Motor neuron (in vitro differentiated cells): ENCODE measurements at regions of chr2 and their contacts with region 1.

Region 1: DNA sequence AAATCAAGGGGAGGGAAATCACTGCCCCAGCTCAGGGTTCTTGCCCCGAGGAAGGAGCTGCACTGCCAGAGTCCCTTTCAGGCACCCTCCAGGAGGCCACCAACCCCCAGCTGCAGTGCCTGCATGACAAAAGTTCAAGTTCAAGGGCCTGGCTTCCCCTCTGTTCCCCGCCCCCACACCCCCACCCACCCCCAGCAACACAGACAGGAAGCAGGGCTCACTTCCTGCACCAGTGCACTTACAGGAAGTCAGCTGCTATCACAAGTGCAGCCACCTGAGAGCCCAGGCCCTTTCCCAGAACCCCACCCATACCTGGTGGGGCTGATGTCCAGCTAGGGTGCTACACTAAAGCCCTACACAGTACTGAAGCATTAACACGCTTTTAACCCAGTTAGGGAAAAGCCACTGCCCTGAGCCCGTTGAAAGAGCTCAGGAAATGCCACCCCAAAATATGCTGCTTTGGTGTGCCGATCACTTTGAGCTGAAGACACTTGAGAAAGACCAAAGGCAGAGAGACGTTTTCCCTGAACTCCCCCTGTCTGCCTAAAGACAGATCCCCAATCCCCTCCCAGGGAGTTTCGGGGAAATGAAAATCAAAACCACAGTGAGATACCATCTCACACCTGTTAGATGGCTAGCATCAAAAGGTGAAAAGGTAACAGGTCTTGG is 109.9 kb upstream of the CAB39 start:
- ATAC-seq: no peak
- H3K4me3 ChIP-seq: no peak overlapping the region
- H3K27ac ChIP-seq: no peak overlapping the region
- H3K4me1 ChIP-seq: no peaks in the 10 kb centered on the region

Region 2: DNA sequence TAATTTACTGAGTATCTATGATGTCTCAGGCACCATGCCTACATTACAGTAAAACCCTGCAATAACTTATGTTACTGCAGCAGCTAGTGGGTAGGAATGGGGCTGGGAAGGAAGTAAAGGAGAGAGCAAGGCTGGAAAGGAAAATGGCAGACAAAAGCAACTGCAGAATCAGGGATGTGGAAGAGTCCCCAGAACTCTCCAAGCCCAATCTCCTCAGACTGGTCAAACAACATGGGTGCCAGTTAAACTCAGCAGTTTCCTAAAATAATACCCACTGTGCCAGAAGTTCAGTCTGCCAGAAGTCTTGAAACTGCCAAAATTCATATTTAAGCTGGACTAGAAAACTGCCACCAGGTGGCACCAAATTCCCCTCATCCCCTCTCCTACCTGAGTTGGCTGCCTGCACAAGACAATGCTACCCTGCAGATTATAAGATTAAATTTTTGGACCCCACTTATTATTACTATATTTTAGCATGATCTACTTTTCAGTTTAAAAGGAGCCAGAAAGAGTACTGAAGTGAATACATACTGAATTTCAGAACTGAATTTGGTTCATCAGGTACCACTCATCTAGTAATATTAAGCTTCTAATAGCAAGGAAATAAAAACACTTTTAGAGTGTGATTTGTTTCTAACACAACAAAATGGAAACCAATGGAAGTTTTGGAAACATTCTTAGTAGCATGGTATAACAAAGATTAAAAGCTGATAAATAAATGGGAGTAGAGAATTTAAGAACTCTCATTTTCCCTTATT is 801.5 kb before region 1 on chr2:
- in situ Hi-C with region 1: loop called in 1 of 9 experiments (anchors 25 kb)
- ATAC-seq: peak in 4 of 8 experiments; percentile 41 to 74 (median 68)
- H3K4me3 ChIP-seq: no peak overlapping the region
- H3K27ac ChIP-seq: no peak overlapping the region
- H3K4me1 ChIP-seq: no peaks in the 10 kb centered on the region

Region 3: GRCh38 chr2:230007931-230008707 is 594.6 kb before region 1 on chr2:
- in situ Hi-C with region 1: loop called in 3 of 9 experiments (anchors 25 kb)
- ATAC-seq: peak in 4 of 8 experiments; percentile 22 to 82 (median 74)
- H3K4me3 ChIP-seq: no peak overlapping the region
- H3K27ac ChIP-seq: no peak overlapping the region
- H3K4me1 ChIP-seq: no peaks in the 10 kb centered on the region

Region 4: GRCh38 chr2:230219419-230220331 is 383.0 kb before region 1 on chr2 and contains the start of gene SP110:
- in situ Hi-C with region 1: loop called in 1 of 9 experiments (anchors 25 kb)
- ATAC-seq: peak in 7 of 8 experiments; percentile 16 to 93 (median 45)
- H3K4me3 ChIP-seq: peak within 1 kb of the TSS; percentile 8 to 26 (median 10)
- H3K27ac ChIP-seq: no peak within 1 kb of the TSS
- H3K4me1 ChIP-seq: no peaks in the 10 kb centered on the region
- total RNA-seq, gene SP110: 0.11 to 40.0 (median 5.9) TPM